Activated T-helper 1 cell treated with anti-CD3 and anti-CD28 coated beads, Interleukin-12 subunit alpha, Interleukin-12 subunit beta, Interleukin-2, Interleukin-4 antibody, amounts not matched to agents 30 ng/mL and 10 ng/mL and 1 ng/mL, durations not matched to agents 14 hours and 24 hours and 36 hours (primary cell): ENCODE measurements at regions of chr11 and their contacts with region 1.

Region 1: DNA sequence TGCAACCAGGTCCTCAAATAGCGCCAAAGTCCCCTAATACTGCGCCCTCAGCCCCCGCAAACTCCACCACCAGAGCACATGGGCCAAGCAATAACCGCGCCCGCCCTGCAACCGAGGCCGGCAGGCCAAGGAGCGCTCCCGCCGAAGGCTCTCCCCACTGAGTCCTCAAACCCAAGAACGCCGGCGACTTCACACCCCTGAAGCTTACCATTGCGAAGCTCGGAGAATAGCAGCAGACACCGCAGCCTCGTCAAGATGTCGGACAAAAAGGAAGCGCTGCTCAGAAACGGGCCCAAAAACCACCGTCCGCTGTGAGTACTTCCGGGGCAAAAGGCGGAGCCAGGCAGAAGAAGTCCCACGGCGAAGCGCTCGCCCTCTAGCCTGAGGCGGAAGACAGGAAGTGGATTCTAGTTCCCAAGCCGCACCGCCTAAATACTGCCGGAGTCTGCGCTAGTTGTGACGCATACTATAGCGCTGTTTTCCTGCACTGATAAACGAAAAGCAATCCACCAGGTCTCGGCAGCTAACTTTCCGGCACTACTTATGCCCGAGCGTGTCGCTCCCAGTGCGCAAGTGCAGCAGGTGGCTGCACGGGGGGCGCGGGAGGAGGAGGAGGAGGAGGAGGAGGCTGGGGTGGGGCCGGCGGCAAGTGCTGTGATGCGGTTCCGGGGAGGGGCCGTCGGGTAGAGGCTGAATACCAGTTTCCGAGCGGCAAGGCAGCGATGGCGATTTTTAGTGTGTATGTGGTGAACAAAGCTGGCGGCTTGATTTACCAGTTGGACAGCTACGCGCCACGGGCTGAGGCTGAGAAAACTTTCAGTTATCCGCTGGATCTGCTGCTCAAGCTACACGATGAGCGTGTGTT is at the starts of genes RPS25 and TRAPPC4:
- DNase-seq: peak; percentile 92
- H3K4me3 Mint-ChIP-seq: peak within 1 kb of the TSS; percentile 99
- H3K27ac Mint-ChIP-seq: peak within 1 kb of the TSS; percentile 100
- H3K4me1 Mint-ChIP-seq: peaks cover 42% of the 10 kb centered on the region
- H3K27me3 Mint-ChIP-seq: no peaks in the 10 kb centered on the region
- total RNA-seq, gene RPS25: 1,440 and 1,455 TPM in 2 replicates
- total RNA-seq, gene TRAPPC4: 141 and 142 TPM in 2 replicates

Region 2: DNA sequence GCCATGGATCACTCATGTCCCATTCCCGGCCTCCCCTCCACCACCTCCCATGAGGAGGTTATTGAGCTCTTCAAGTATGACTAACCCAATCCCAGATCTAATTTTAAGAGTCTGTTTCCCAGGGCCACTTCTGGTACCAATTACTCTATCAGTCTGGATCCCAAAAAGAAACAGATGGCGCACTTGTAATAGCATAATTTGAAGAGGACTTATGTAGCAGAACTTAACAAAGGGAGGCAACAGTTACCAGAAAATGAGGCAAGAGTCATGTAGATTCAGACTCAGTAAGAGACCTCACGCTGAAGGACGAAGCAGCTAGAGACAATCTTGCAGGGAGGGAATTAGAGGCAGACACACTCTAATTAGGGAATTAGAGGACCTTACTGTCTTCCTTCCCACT is 274.3 kb before region 1 on chr11:
- intact Hi-C with region 1: no loop called
- DNase-seq: no peak
- H3K4me3 Mint-ChIP-seq: no peak overlapping the region
- H3K27ac Mint-ChIP-seq: no peak overlapping the region
- H3K4me1 Mint-ChIP-seq: no peaks in the 10 kb centered on the region
- H3K27me3 Mint-ChIP-seq: peaks cover 5% of the 10 kb centered on the region

Region 3: GRCh38 chr11:118997627-118998387 is 20.5 kb before region 1 on chr11 and contains the start of gene CENATAC:
- intact Hi-C with region 1: loop called (anchors 1 kb)
- DNase-seq: peak; percentile 96
- H3K4me3 Mint-ChIP-seq: peak within 1 kb of the TSS; percentile 96
- H3K27ac Mint-ChIP-seq: peak within 1 kb of the TSS; percentile 97
- H3K4me1 Mint-ChIP-seq: peaks cover 27% of the 10 kb centered on the region
- H3K27me3 Mint-ChIP-seq: no peaks in the 10 kb centered on the region
- total RNA-seq, gene CENATAC: 50.1 and 53.6 TPM in 2 replicates

Region 4: GRCh38 chr11:119084663-119085436 is 66.5 kb after region 1 on chr11 and contains the start of gene HMBS:
- intact Hi-C with region 1: loop called (anchors 1 kb)
- DNase-seq: peak; percentile 89
- H3K4me3 Mint-ChIP-seq: peak within 1 kb of the TSS; percentile 97
- H3K27ac Mint-ChIP-seq: peak within 1 kb of the TSS; percentile 92
- H3K4me1 Mint-ChIP-seq: peaks cover 39% of the 10 kb centered on the region
- H3K27me3 Mint-ChIP-seq: no peaks in the 10 kb centered on the region
- total RNA-seq, gene HMBS: 55.0 and 55.6 TPM in 2 replicates

Region 5: DNA sequence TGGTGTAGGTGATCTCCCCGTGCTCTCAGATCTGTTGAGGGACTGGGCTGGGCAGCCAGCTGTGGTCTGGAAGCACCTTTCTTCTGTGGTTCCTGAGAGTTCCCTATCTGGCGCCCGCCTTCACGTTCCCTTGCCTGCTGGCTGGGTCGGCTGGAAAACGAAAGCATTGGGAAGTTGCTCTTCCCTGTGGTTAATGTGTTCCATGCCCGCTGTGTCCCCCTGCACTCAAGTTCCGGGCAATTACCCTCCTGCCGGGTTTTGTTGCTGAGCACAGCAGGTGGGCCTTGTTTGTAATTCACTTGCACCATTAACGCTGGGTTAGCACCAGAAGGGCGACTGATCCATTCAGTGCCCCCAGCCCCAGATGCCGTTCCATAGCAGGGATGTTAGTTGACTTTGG is 1627.3 kb after region 1 on chr11:
- intact Hi-C with region 1: no loop called
- DNase-seq: no peak
- H3K4me3 Mint-ChIP-seq: no peak overlapping the region
- H3K27ac Mint-ChIP-seq: no peak overlapping the region
- H3K4me1 Mint-ChIP-seq: no peaks in the 10 kb centered on the region
- H3K27me3 Mint-ChIP-seq: peaks cover 2% of the 10 kb centered on the region